ENCODE measurements at regions of chr5 and their contacts with region 1.

Region 1: GRCh38 chr5:140362860-140363630 is 3.1 kb downstream of the SLC4A9 start:
- H3K4me3 ChIP-seq: peak overlapping the region; percentile 33
- H3K27ac ChIP-seq: no peak overlapping the region; the same call in 1 of the 2 replicates
- H3K4me1 ChIP-seq: no peaks in the 10 kb centered on the region
- CTCF ChIP-seq: peak; percentile 94

Region 2: DNA sequence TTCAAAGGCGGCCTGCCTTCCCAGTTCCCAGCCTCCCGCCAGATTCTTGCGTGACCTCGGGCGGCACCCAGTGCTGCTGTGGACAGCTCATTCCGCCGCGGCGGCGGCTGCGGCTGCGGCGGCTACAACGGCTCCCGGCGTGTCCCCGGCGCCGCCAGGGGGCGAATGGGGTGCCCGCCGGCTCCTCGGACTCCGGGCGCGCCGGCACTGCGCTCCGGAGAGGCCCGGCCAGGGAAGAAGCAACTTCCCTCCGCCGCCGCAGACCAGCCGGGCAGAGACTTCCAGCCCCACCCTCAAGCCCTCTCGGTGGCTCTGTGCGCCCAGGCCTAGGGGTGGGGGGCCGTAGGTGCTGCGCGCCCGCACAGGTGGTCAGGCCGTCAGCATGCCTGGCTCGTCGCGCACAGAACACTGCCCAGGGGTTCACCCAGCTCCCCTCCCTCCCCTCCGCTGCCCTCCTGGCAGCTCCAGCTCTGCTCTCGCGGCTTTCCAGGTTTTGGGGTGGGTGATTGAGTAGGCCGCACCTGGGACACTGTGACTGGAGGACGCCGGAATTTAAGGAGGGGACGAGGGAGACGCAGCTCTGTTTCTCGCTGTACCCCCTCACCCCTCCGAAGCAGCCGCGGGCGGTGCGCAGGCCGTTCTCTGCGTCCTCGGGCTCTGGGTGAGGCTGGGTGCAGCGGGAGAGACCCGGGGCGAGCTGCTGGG is 217.1 kb before region 1 on chr5:
- CTCF ChIA-PET with region 1: no interaction called
- POLR2A ChIA-PET with region 1: no interaction called
- H3K4me3 ChIP-seq: peak overlapping the region; percentile 8; the same call in 1 of the 2 replicates
- H3K27ac ChIP-seq: no peak overlapping the region
- H3K4me1 ChIP-seq: no peaks in the 10 kb centered on the region
- CTCF ChIP-seq: no peak

Region 3: DNA sequence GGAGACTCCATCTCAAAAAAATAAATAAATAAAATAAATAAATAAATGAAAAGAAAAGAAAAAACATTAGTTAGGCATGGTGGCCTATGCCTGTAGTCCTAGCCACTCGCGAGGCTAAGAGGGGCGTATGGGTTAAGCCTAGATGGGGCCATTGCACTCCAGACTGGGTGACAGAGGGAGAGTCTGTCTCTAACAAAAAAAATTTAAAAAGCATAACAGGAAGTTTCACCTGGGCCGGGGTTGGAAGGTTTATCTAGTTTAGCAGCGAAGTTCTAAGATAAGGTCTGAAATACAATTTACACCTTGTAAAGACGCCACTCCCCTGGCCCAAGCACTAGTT is 355.2 kb after region 1 on chr5:
- CTCF ChIA-PET with region 1: interaction called, 10 read pairs
- POLR2A ChIA-PET with region 1: no interaction called
- H3K4me3 ChIP-seq: peak overlapping the region; percentile 45
- H3K27ac ChIP-seq: no peak overlapping the region; the same call in 1 of the 2 replicates
- H3K4me1 ChIP-seq: no peaks in the 10 kb centered on the region
- CTCF ChIP-seq: no peak